Activated T-helper 1 cell treated with anti-CD3 and anti-CD28 coated beads, Interleukin-12 subunit alpha, Interleukin-12 subunit beta, Interleukin-2, Interleukin-4 antibody, amounts not matched to agents 30 ng/mL and 10 ng/mL and 1 ng/mL, durations not matched to agents 14 hours and 24 hours and 36 hours (primary cell): ENCODE measurements at regions of chr1 and their contacts with region 1.

Region 1: DNA sequence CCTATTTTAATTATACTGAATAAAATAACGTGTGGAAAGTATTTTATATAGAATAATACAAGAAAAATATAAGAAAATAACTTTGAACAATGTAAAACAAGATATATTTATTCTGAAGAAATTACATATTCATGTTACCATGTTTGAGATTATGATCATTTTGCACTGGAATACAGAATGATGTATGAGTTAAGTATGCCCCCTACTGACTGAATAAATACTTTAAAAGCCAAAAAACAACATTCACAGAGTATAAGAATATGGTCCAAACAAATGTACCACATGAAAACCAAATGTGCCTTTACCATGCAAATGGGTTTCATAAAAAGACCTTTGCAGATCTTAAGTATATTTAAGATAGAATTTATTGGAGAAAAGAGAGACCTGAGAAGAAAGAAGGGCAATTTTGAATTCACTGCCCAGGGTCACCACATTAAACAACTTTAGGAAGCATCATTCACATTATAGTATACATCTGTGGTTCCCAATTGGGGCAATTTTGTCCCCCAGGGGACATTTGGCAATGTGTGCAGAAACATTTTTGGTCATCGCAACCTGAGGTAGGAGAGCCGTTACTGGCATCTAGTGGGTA is 136.6 kb upstream of the GFI1 start:
- DNase-seq: no peak
- H3K4me3 Mint-ChIP-seq: no peak overlapping the region
- H3K27ac Mint-ChIP-seq: no peak overlapping the region
- H3K4me1 Mint-ChIP-seq: no peaks in the 10 kb centered on the region
- H3K27me3 Mint-ChIP-seq: peaks cover 9% of the 10 kb centered on the region

Region 2: DNA sequence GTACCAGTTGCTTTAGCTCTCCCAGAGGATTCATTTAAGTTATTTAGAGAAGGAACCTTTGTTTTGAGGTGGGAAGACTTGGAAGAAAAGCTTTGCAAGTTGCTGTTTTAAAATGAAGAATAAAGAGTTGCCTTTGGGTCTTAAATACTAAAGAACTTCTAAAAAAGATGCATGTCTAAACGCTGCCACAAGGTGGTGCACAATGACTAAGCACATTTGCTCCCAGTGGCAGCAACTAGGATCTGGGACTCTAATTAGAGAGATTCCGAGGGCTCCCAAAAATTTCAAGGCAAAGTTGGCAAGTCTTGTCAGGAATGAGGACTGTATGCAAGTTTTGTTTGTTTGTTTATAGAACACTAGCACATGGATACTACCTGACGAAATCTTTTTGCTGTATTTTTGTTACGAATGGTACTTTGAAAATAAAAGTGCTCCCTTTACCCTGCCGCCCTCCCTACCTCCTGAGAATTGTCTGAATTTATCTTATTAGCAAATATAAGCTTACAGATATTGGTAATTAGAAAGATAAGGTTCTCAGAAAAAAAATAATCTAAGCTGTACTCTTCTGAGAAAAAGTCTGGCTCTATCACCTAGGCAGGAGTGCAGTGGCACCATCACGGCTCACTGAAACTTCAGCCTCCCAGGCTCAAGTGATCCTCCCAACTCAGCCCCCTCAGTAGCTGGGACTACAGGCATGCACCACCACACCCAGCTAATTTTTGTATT is 1340.4 kb before region 1 on chr1:
- intact Hi-C with region 1: loop called (anchors 10 kb)
- DNase-seq: peak; percentile 7
- H3K4me3 Mint-ChIP-seq: no peak overlapping the region
- H3K27ac Mint-ChIP-seq: no peak overlapping the region
- H3K4me1 Mint-ChIP-seq: no peaks in the 10 kb centered on the region
- H3K27me3 Mint-ChIP-seq: peaks cover 13% of the 10 kb centered on the region

Region 3: DNA sequence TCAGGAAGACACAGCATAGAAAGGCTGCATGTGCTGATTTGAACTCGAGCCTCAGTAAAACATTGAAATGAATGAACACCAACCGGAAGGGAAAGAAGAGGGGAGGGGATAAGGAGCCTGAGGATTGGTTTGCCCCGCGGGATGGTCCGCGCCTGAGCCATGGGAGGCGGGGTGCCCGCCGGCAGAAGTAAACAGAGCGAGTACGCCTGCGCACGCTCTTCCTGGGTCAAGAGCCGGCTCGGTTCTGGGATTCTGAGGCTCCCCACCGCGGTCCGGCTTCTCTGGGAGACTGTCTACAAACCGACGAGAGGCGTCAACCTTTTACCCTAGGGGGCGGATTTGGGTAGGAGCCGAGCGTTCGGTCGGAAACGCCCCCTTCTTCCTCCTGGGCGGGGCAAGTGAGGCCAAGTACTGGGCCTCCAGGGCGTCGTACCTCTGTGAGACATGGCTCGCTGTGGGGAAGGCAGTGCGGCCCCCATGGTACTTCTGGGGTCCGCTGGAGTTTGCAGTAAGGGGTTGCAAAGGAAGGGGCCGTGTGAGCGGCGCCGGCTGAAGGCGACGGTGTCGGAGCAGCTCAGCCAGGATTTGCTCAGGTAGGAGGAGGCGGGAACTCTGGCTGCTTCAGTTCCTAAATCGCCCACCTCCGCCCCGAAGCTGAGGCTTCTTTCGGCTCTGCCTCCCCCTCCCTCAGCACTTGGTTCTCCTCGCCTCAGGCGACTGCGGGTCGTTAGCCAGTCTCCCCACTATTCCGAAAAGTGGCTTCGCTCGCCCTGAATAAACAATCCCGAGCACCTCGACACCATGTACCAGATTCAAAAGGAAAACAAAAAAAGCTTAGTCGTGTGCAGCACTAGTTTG is 542.9 kb before region 1 on chr1 and contains the start of gene BTBD8:
- intact Hi-C with region 1: loop called (anchors 5 kb)
- DNase-seq: peak; percentile 79
- H3K4me3 Mint-ChIP-seq: peak within 1 kb of the TSS; percentile 86
- H3K27ac Mint-ChIP-seq: peak within 1 kb of the TSS; percentile 85
- H3K4me1 Mint-ChIP-seq: peaks cover 13% of the 10 kb centered on the region
- H3K27me3 Mint-ChIP-seq: no peaks in the 10 kb centered on the region
- total RNA-seq, gene BTBD8: 0.91 and 1.0 TPM in 2 replicates

Region 4: GRCh38 chr1:92310185-92310597 is 313.1 kb before region 1 on chr1:
- intact Hi-C with region 1: loop called (anchors 1 kb)
- DNase-seq: no peak
- H3K4me3 Mint-ChIP-seq: no peak overlapping the region
- H3K27ac Mint-ChIP-seq: no peak overlapping the region
- H3K4me1 Mint-ChIP-seq: peaks cover 42% of the 10 kb centered on the region
- H3K27me3 Mint-ChIP-seq: no peaks in the 10 kb centered on the region

Region 5: GRCh38 chr1:92424381-92424780 is 198.9 kb before region 1 on chr1:
- intact Hi-C with region 1: loop called (anchors 2 kb)
- DNase-seq: no peak
- H3K4me3 Mint-ChIP-seq: no peak overlapping the region
- H3K27ac Mint-ChIP-seq: no peak overlapping the region
- H3K4me1 Mint-ChIP-seq: no peaks in the 10 kb centered on the region
- H3K27me3 Mint-ChIP-seq: peaks cover 1% of the 10 kb centered on the region

Region 6: GRCh38 chr1:92968138-92969032 is 345.1 kb after region 1 on chr1:
- intact Hi-C with region 1: no loop called
- DNase-seq: no peak
- H3K4me3 Mint-ChIP-seq: no peak overlapping the region
- H3K27ac Mint-ChIP-seq: no peak overlapping the region
- H3K4me1 Mint-ChIP-seq: peaks cover 42% of the 10 kb centered on the region
- H3K27me3 Mint-ChIP-seq: no peaks in the 10 kb centered on the region